ENCODE measurements at regions of chr5 and their contacts with region 1.

Region 1: GRCh38 chr5:139517683-139518564 is 35.4 kb upstream of the STING1 start:
- DNase-seq: peak; percentile 92
- ATAC-seq: peak; percentile 97
- H3K4me3 Mint-ChIP-seq: peak overlapping the region; percentile 78
- H3K27ac Mint-ChIP-seq: peak overlapping the region; percentile 90
- H3K4me1 Mint-ChIP-seq: peaks cover 34% of the 10 kb centered on the region
- H3K27me3 Mint-ChIP-seq: no peaks in the 10 kb centered on the region

Region 2: DNA sequence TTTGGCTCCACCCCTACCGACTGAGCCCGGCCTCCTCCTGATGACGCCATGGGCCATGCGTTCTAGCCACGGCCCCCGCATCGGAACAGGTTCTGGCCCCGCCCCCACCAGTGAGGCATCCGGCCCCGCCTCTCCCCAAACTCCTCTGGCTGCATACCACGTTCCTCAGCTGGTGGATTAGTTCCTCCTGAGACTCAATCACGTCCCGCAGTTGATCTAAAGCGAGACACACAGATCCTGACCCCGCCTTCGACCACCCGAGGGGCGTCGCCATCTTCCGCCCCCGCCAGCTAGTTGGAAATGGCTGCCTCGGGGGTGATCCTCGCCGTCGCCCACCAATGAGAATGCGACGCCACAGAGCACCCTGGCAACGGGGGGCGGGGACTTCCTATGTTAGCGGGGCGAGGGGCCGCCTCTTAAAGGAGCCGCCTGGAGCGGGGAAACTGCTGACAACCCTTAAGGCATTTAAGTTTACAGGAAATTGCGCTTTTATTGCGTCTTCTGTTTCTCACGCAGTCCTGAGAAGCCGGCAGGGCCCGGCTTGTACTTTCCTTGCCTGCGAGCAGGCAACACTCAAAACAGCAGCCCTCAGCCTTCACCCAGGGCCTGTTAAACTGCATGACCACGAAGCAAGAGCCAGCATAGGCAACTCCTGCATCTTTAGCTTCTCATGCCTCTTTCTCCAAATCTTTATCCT is 114.0 kb before region 1 on chr5 and contains the start of gene SPATA24:
- CTCF ChIA-PET with region 1: interaction called, 13 read pairs
- DNase-seq: peak; percentile 99
- ATAC-seq: peak; percentile 95
- H3K4me3 Mint-ChIP-seq: peak within 1 kb of the TSS; percentile 92
- H3K27ac Mint-ChIP-seq: peak within 1 kb of the TSS; percentile 99
- H3K4me1 Mint-ChIP-seq: peaks cover 45% of the 10 kb centered on the region
- H3K27me3 Mint-ChIP-seq: no peaks in the 10 kb centered on the region
- total RNA-seq, gene SPATA24: 5.8 to 6.2 TPM

Region 3: DNA sequence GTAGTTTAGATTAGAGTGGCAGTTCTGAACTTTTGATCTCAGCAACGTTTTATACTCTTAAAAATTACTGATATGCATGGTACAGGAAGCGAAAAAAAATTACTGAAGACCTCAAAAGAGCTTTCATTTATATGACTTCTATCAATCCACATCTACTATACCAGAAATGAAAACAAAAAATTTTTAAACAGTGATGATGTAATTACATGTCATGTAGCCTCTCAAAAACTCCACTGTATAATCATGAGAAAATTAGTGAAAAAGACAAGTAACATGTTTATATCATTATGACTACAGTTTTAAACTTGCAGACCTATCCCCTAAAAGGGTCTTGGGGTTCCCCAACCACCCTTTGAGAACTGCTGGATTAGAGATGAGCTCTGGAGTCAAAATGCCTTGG is 87.9 kb before region 1 on chr5:
- CTCF ChIA-PET with region 1: interaction called, 423 read pairs
- DNase-seq: no peak
- ATAC-seq: no peak
- H3K4me3 Mint-ChIP-seq: no peak overlapping the region
- H3K27ac Mint-ChIP-seq: no peak overlapping the region
- H3K4me1 Mint-ChIP-seq: peaks cover 6% of the 10 kb centered on the region
- H3K27me3 Mint-ChIP-seq: no peaks in the 10 kb centered on the region

Region 4: DNA sequence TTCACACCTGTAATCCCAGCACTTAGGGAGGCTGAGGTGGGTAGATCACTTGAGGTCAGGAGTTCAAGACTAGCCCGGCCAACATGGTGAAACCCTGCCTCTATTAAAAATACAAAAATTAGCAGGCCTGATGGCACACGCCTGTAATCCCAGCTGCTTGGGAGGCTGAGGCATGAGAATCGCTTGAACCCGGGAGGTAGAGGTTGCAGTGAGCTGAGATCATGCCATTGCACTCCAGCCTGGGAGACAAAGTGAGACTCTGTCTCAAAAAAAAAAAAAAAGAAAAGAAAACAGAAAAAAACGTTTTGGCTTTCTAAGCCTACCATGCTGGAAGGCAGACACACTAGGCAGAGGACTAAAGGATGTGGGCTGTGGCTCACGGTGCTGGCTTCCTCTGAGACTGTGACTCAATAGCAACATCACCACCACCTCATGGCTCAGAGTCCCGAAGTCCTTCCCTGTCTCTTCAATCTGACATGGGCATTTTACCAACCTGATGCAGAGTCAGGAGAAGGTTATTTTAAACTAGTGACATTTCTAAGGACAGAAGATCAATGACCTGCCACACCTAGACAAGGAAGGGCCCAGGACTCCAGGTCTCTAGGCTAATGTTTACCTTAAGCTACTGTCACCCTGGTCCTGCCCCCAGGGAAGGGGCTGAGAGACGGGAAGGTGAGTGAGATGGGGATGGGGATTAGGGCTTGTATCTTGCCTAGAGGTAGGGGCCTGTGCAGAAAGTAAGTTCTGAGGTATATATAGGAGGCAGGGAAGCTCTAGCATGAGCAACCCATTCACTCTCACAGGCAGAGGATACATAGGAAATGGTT is 59.1 kb before region 1 on chr5:
- CTCF ChIA-PET with region 1: interaction called, 20 read pairs
- DNase-seq: peak; percentile 96
- ATAC-seq: peak; percentile 86
- H3K4me3 Mint-ChIP-seq: peak overlapping the region; percentile 51
- H3K27ac Mint-ChIP-seq: peak overlapping the region; percentile 86
- H3K4me1 Mint-ChIP-seq: peaks cover 63% of the 10 kb centered on the region
- H3K27me3 Mint-ChIP-seq: no peaks in the 10 kb centered on the region

Region 5: DNA sequence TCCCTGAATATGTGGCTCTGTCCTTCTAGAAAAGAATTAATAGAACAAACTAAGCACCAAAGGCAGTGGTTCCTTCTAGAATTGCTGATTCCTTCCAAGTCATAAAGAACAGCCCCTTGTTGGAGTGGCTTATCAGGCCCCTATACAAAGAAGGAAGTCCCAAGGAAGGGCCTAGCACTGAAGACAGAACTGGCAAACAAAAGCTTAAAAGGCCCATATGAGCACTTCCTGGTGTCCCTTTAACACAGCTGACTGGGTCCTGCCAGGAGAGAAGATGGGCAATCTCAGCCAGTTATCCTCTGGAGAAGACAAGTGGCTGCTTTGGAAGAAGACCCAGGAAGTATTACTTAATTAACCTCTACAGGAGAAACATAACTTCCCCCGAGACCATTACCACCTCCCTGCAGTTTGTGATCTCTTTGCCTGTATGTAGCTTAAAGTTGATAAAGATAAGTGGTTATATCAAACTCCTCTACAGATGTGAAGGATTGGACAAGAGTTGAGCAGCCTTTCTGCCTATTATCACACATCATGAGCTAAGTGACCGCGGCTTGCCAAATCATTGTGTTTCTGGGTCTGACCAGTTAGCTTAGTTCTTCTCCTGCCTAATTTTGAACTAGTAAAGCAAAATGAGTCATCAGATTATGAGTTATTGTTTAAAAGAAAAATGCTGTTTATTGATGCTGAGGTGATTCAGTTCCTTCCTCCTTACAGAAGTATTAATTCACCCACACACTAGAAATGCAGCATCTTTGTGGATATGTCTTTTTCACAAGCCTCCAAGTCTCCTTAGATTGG is 22.1 kb before region 1 on chr5:
- CTCF ChIA-PET with region 1: interaction called, 31 read pairs
- DNase-seq: no peak
- ATAC-seq: no peak
- H3K4me3 Mint-ChIP-seq: no peak overlapping the region
- H3K27ac Mint-ChIP-seq: no peak overlapping the region
- H3K4me1 Mint-ChIP-seq: peaks cover 18% of the 10 kb centered on the region
- H3K27me3 Mint-ChIP-seq: peaks cover 3% of the 10 kb centered on the region

Measured in activated CD8-positive, alpha-beta memory T cell treated with anti-CD3 and anti-CD28 coated beads, Interleukin-2, amount 10 ng/mL, durations not matched to agents 7 days and 5 days (primary cell).